CD4-positive, alpha-beta memory T cell (primary cell): ENCODE measurements at regions of chr12 and their contacts with region 1.

Region 1: GRCh38 chr12:57111031-57111734 is at the start of gene STAT6:
- DNase-seq: peak; percentile 87 to 96 (median 90)
- H3K4me3 ChIP-seq: peak within 1 kb of the TSS; percentile 90 to 99
- H3K4me3 Mint-ChIP-seq: peak within 1 kb of the TSS; percentile 93 to 100 (median 96)
- H3K27ac ChIP-seq: peak within 1 kb of the TSS; percentile 93
- H3K27ac Mint-ChIP-seq: peak within 1 kb of the TSS; percentile 94 to 100 (median 98)
- H3K4me1 ChIP-seq: peaks cover 34% of the 10 kb centered on the region
- H3K4me1 Mint-ChIP-seq: peaks cover 28 to 64% (median 38%) of the 10 kb centered on the region in 4 donors
- H3K27me3 ChIP-seq: no peaks in the 10 kb centered on the region
- H3K27me3 Mint-ChIP-seq: peaks cover 0 to 4% of the 10 kb centered on the region in 2 donors
- total RNA-seq, gene STAT6: 399 to 424 TPM

Region 2: DNA sequence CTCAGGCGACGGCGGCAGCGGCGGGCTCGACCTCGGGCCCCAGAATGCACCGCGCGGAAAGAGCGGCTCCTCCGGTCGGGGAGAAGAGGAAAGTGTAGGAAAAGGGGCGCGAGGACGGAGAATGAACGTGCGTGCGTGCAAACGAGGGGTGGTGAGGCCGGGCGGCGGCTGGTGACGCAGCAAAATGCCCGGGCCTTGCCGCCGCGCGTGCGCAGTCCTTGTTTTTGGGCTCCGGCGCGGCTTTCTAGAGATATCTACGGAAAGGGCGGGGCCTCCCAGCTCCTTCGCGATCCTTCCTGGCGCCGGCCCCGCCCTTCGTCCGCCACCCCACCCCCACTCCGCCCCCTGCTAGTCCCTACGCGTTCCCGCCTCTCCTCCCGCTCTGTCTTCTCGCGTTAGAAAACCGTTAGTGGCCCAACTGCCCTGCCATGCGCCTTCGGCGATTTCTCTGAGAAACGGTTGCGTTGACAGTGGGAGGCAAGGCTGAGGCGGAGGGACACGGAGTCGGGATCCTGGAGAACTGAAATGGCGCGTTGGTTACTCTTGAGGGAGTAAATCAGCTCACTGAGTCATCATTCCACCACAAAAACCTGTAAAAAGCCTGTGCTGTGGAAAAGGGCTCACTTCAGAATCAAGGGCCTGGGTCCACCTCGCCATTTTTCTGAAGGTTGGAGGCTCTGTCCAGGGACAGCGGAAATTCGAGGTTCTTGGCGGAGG is 422.9 kb before region 1 on chr12 and contains the start of gene PTGES3:
- CTCF ChIA-PET with region 1: interaction called, 4 read pairs
- POLR2A ChIA-PET with region 1: interaction called, 15 read pairs
- intact Hi-C with region 1: loop called (anchors 5 kb)
- DNase-seq: peak; percentile 97 to 98 (median 98)
- H3K4me3 ChIP-seq: peak within 1 kb of the TSS; percentile 83 to 99
- H3K4me3 Mint-ChIP-seq: peak within 1 kb of the TSS; percentile 99 to 100 (median 100)
- H3K27ac ChIP-seq: peak within 1 kb of the TSS; percentile 99
- H3K27ac Mint-ChIP-seq: peak within 1 kb of the TSS; percentile 96 to 100 (median 100)
- H3K4me1 ChIP-seq: peaks cover 36% of the 10 kb centered on the region
- H3K4me1 Mint-ChIP-seq: peaks cover 16 to 51% (median 25%) of the 10 kb centered on the region in 4 donors
- H3K27me3 ChIP-seq: no peaks in the 10 kb centered on the region
- H3K27me3 Mint-ChIP-seq: no peaks in the 10 kb centered on the region
- total RNA-seq, gene PTGES3: 191 to 195 TPM

Region 3: DNA sequence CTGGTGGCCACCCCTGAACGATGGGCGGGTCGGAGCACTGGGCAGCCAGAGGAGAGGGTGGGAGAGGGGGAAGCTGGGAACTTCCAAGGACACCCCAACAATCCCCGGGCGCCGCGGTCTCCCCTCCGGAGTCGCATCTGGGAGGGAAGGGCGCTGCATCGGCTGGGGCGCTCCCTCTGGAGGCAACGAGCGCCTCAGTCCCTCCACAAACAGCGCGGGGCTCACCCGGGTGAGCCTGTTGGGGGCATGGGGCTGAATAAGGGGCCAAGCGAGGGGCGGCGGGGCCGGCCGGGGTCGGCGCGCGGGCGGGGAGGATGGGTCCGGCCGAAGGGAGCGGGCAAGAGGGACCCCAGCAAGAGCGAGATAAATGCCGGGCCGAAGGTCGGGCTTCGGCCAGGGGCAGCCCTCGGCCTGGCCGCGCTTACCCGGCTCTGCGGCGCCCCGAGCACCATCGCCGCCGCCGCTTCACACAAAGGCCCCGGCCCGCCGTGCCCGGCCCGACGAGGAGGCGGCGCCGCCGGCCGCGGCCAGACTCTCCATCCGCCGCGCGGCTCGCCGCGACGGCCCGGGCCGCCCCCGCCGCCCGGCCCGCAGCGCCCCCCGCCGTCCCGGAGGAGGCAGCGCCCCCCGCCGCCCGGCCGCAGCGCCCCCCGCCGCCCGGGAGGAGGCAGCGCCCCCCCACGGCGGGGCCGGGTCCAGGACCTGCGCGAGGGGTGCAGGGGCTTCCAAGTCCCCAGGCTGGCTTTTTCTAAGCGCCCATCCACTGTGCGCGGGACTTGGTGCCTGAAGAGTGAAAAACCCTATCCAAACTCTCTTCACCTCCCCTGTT is 105.0 kb before region 1 on chr12 and contains the start of gene ZBTB39:
- CTCF ChIA-PET with region 1: interaction called, 21 read pairs
- POLR2A ChIA-PET with region 1: interaction called, 62 read pairs
- intact Hi-C with region 1: loop called (anchors 1 kb)
- DNase-seq: peak; percentile 50 to 76 (median 68)
- H3K4me3 ChIP-seq: peak within 1 kb of the TSS; percentile 44 to 60
- H3K4me3 Mint-ChIP-seq: peak within 1 kb of the TSS; percentile 90 to 98 (median 96)
- H3K27ac ChIP-seq: peak within 1 kb of the TSS; percentile 69
- H3K27ac Mint-ChIP-seq: peak within 1 kb of the TSS; percentile 83 to 96 (median 95)
- H3K4me1 ChIP-seq: peaks cover 52% of the 10 kb centered on the region
- H3K4me1 Mint-ChIP-seq: peaks cover 36 to 67% (median 52%) of the 10 kb centered on the region in 4 donors
- H3K27me3 ChIP-seq: no peaks in the 10 kb centered on the region
- H3K27me3 Mint-ChIP-seq: no peaks in the 10 kb centered on the region
- total RNA-seq, gene ZBTB39: 10.8 to 12.2 TPM

Region 4: GRCh38 chr12:57078519-57079404 is 32.4 kb before region 1 on chr12 and contains the start of gene NEMP1:
- CTCF ChIA-PET with region 1: interaction called, 458 read pairs
- POLR2A ChIA-PET with region 1: interaction called, 373 read pairs
- intact Hi-C with region 1: loop called (anchors 1 kb)
- DNase-seq: peak; percentile 94 to 100 (median 99)
- H3K4me3 ChIP-seq: peak within 1 kb of the TSS; percentile 73 to 94
- H3K4me3 Mint-ChIP-seq: peak within 1 kb of the TSS; percentile 92 to 98 (median 94)
- H3K27ac ChIP-seq: peak within 1 kb of the TSS; percentile 75
- H3K27ac Mint-ChIP-seq: peak within 1 kb of the TSS; percentile 86 to 98 (median 96)
- H3K4me1 ChIP-seq: peaks cover 18% of the 10 kb centered on the region
- H3K4me1 Mint-ChIP-seq: peaks cover 10 to 37% (median 18%) of the 10 kb centered on the region in 4 donors
- H3K27me3 ChIP-seq: no peaks in the 10 kb centered on the region
- H3K27me3 Mint-ChIP-seq: no peaks in the 10 kb centered on the region
- total RNA-seq, gene NEMP1: 27.2 TPM

Region 5: DNA sequence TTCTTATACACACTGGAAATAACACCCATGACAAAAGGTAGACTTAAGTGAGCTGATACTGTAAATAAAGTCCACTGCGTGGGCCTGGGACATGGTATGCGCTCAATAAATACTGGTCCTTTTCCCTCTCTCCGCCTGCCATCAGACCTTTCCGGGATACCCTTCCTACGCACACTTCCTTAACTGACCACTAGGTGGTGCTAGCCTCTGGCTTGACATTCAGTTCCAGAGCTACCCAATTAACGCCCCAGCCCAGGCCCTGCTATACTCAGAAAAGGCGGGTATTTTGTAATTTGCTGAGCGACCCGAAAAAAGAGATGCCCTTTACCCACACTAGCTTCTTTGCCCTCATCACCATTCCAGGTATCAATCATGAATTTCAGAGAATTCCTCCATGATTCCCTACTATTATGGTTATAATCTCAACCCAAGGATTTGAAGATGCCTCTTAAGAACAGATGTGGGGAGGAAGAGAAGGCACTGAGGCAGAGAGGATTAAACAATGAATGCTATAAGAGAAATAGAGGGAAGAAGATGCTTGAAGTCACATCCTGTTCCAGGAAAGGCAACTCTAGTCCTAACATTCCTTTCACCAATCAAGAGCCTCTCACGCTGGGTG is 13.2 kb after region 1 on chr12:
- CTCF ChIA-PET with region 1: interaction called, 87 read pairs
- POLR2A ChIA-PET with region 1: interaction called, 57 read pairs
- intact Hi-C with region 1: loop called (anchors 1 kb)
- DNase-seq: peak; percentile 73 to 78 (median 78)
- H3K4me3 ChIP-seq: no peak overlapping the region
- H3K4me3 Mint-ChIP-seq: peak overlapping the region in 1 of 8 donors; percentile 1
- H3K27ac ChIP-seq: no peak overlapping the region
- H3K27ac Mint-ChIP-seq: peak overlapping the region in 1 of 7 donors; percentile 43
- H3K4me1 ChIP-seq: peaks cover 8% of the 10 kb centered on the region
- H3K4me1 Mint-ChIP-seq: peaks cover 2 to 10% (median 6%) of the 10 kb centered on the region in 4 donors
- H3K27me3 ChIP-seq: no peaks in the 10 kb centered on the region
- H3K27me3 Mint-ChIP-seq: no peaks in the 10 kb centered on the region